Endothelial cell of umbilical vein (primary cell): ENCODE measurements at regions of chr14 and their contacts with region 1.

Region 1: DNA sequence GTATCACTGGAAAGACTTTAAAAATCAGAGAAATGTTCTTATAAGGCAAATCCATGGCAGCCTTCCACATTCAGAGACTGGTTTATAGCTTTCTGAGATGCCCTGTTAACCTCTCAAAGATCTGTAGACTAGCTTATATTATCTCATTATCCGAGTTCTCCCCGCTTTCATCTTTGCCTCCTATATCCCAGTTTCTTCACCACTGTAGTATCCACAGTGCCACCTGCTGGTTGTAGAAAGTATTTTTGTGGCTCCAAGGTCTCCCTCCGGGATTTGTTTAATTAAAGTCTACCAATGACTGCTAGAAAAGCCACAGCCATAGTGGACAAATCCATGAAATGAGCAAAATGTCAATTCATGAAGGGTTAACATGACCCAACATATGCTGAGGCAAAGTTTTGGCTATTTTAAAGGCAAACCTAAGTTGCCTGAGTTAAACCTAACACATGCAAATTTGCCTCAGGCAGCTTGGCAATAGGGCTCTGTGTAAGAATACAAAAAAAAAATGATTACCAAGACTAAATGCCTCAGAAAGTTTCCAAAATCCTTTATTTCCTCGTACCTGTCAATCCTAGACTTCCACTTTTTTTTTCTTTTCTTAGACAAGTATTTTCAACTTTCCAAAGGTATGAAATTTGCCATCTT is 218.8 kb upstream of the BMP4 start:
- DNase-seq: peak; percentile 91
- H3K4me3 ChIP-seq: no peak overlapping the region
- H3K27ac ChIP-seq: no peak overlapping the region
- H3K4me1 ChIP-seq: peaks cover 36% of the 10 kb centered on the region
- H3K27me3 ChIP-seq: no peaks in the 10 kb centered on the region
- CTCF ChIP-seq: peak; percentile 57 to 62
- POLR2A ChIP-seq: no peak

Region 2: GRCh38 chr14:53432378-53432802 is 743.0 kb before region 1 on chr14:
- CTCF ChIA-PET with region 1: interaction called, 14 read pairs
- POLR2A ChIA-PET with region 1: no interaction called
- dilution Hi-C with region 1: no loop called
- intact Hi-C with region 1: loop called (anchors 1 kb)
- DNase-seq: peak; percentile 70
- H3K4me3 ChIP-seq: no peak overlapping the region
- H3K27ac ChIP-seq: no peak overlapping the region
- H3K4me1 ChIP-seq: no peaks in the 10 kb centered on the region
- H3K27me3 ChIP-seq: peaks cover 6 to 14% of the 10 kb centered on the region in 2 experiments
- CTCF ChIP-seq: peak; percentile 64 to 68
- POLR2A ChIP-seq: no peak

Region 3: GRCh38 chr14:53663709-53664108 is 511.7 kb before region 1 on chr14:
- CTCF ChIA-PET with region 1: interaction called, 6 read pairs
- POLR2A ChIA-PET with region 1: no interaction called
- dilution Hi-C with region 1: no loop called
- intact Hi-C with region 1: loop called (anchors 1 kb)
- DNase-seq: peak; percentile 51
- H3K4me3 ChIP-seq: no peak overlapping the region
- H3K27ac ChIP-seq: no peak overlapping the region
- H3K4me1 ChIP-seq: peaks cover 9% of the 10 kb centered on the region
- H3K27me3 ChIP-seq: no peaks in the 10 kb centered on the region
- CTCF ChIP-seq: peak; percentile 18 to 46
- POLR2A ChIP-seq: no peak

Region 4: GRCh38 chr14:54001189-54001913 is 174.1 kb before region 1 on chr14:
- CTCF ChIA-PET with region 1: interaction called, 7 read pairs
- POLR2A ChIA-PET with region 1: no interaction called
- dilution Hi-C with region 1: no loop called
- intact Hi-C with region 1: loop called (anchors 1 kb)
- DNase-seq: peak; percentile 34
- H3K4me3 ChIP-seq: no peak overlapping the region
- H3K27ac ChIP-seq: peak overlapping the region; percentile 69
- H3K4me1 ChIP-seq: peaks cover 20% of the 10 kb centered on the region
- H3K27me3 ChIP-seq: no peaks in the 10 kb centered on the region
- CTCF ChIP-seq: peak in 1 of 2 donors; percentile 10
- POLR2A ChIP-seq: no peak

Region 5: DNA sequence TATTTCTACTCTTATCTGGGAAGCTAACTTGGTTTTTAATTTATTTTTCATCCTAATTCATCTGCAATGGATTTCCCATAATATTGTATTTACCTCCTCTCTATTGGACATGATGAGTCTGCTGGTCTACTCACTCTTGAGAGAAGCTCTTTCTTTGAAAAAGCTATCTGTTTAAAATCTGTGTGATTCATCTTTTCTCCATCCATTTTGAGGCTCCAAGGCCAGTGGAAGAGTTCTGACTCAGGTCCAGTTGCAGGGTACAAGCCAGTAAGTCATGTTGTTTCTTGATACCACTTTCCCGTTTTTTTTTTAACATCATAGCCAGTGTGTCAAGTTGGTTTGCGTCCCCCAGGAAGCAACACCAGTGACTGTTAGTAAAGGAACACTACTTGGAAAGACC is 58.4 kb before region 1 on chr14:
- CTCF ChIA-PET with region 1: interaction called, 16 read pairs
- POLR2A ChIA-PET with region 1: no interaction called
- dilution Hi-C with region 1: no loop called
- intact Hi-C with region 1: no loop called
- DNase-seq: peak; percentile 77
- H3K4me3 ChIP-seq: no peak overlapping the region
- H3K27ac ChIP-seq: peak overlapping the region; percentile 54
- H3K4me1 ChIP-seq: peaks cover 42% of the 10 kb centered on the region
- H3K27me3 ChIP-seq: no peaks in the 10 kb centered on the region
- CTCF ChIP-seq: no peak
- POLR2A ChIP-seq: no peak

Region 6: GRCh38 chr14:54291491-54292191 is 116.2 kb after region 1 on chr14:
- CTCF ChIA-PET with region 1: no interaction called
- POLR2A ChIA-PET with region 1: no interaction called
- dilution Hi-C with region 1: no loop called
- intact Hi-C with region 1: no loop called
- DNase-seq: peak; percentile 41
- H3K4me3 ChIP-seq: no peak overlapping the region
- H3K27ac ChIP-seq: no peak overlapping the region
- H3K4me1 ChIP-seq: peaks cover 11% of the 10 kb centered on the region
- H3K27me3 ChIP-seq: no peaks in the 10 kb centered on the region
- CTCF ChIP-seq: no peak
- POLR2A ChIP-seq: no peak

Region 7: DNA sequence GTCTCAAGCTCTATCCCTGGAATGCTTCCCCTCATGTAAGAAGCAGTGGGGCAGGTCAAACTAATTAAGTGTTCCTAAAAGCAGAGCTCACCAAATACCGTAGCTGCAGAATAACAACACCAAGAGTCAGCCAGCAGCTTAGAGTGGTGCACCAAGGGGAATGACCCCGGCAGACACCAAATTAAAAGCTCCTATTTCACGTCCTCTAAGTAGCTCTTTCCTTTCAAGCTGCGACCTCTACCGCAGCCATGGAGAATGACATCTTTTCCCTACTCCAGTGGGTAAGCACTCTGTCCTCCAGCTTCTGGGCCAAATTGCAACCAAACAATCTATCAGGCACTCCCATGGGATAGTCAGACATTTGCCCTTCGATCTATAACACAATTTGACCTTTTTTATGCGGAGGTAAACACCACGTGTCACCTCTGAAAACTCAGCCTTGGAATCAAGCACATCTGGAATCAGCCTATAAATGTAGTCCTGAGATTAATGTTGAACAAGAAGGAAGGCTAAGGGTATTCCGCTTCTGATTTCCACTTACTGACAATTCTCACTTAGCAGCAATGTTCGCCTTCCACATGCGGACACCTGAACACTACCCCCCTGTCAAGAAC is 153.8 kb after region 1 on chr14:
- CTCF ChIA-PET with region 1: interaction called, 103 read pairs
- POLR2A ChIA-PET with region 1: no interaction called
- dilution Hi-C with region 1: no loop called
- intact Hi-C with region 1: loop called (anchors 1 kb)
- DNase-seq: peak; percentile 81
- H3K4me3 ChIP-seq: no peak overlapping the region
- H3K27ac ChIP-seq: peak overlapping the region; percentile 24
- H3K4me1 ChIP-seq: peaks cover 55% of the 10 kb centered on the region
- H3K27me3 ChIP-seq: no peaks in the 10 kb centered on the region
- CTCF ChIP-seq: peak; percentile 72 to 74
- POLR2A ChIP-seq: no peak